ENCODE measurements at regions of chr1 and their contacts with region 1.

Region 1: DNA sequence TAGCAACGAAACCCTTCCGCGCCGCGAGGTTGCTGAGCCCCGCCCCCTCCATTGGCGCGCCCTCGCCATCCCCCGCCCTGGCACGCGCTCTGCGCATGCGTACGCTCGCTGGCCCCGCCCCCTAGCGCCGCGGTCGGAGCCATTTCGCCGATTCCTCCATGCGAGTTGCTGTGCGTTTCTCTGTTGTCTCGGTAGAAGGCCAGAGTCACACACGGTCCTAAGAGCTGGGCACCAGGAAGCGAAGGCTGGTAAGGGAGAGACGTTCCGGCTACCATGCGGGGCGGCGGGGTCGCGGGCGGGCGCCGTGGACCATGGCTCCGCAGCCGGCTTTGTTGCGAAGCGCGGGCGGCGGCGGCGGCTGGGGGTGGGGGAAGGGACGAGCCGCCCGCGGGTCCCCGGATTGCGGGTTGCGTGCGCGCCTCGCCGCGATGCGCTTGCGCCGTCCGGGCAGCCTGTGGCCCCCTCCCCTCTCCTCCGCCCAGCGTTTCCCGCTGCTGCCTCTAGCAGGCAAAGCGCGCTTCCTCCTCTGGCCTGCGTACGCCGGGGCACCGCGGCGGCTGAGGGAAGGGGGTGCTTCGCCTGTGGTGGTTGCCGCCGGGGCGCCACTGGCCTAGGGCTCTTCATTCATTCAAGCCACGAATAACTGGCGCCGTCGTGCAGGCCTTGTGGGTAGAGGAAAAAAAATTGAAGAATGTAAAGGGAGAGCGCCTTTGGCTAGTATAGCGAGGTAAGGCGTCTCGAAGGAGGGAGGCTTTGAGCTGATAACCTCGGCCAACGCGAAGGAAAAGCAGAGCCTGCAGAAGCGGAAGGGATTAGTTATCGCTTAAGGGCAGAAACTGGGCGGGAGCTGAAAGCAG is at the start of gene DHX9:
- DNase-seq: peak; percentile 93 to 99 (median 96)
- ATAC-seq: peak; percentile 84
- H3K4me3 ChIP-seq: peak within 1 kb of the TSS; percentile 69 to 87
- H3K4me3 Mint-ChIP-seq: peak within 1 kb of the TSS; percentile 95
- H3K27ac ChIP-seq: peak within 1 kb of the TSS; percentile 66 to 86
- H3K27ac Mint-ChIP-seq: peak within 1 kb of the TSS; percentile 98
- H3K4me1 ChIP-seq: peaks cover 36% of the 10 kb centered on the region
- H3K4me1 Mint-ChIP-seq: peaks cover 49% of the 10 kb centered on the region
- H3K27me3 ChIP-seq: no peaks in the 10 kb centered on the region
- H3K27me3 Mint-ChIP-seq: no peaks in the 10 kb centered on the region
- CTCF ChIP-seq: peak; percentile 28
- total RNA-seq, gene DHX9: 374 to 382 TPM

Region 2: GRCh38 chr1:182337736-182338571 is 501.5 kb before region 1 on chr1:
- CTCF ChIA-PET with region 1: no interaction called
- POLR2A ChIA-PET with region 1: no interaction called
- intact Hi-C with region 1: no loop called
- DNase-seq: no peak
- ATAC-seq: no peak
- H3K4me3 ChIP-seq: no peak overlapping the region
- H3K4me3 Mint-ChIP-seq: no peak overlapping the region
- H3K27ac ChIP-seq: no peak overlapping the region
- H3K27ac Mint-ChIP-seq: no peak overlapping the region
- H3K4me1 ChIP-seq: no peaks in the 10 kb centered on the region
- H3K4me1 Mint-ChIP-seq: no peaks in the 10 kb centered on the region
- H3K27me3 ChIP-seq: no peaks in the 10 kb centered on the region
- H3K27me3 Mint-ChIP-seq: no peaks in the 10 kb centered on the region
- CTCF ChIP-seq: no peak

Region 3: DNA sequence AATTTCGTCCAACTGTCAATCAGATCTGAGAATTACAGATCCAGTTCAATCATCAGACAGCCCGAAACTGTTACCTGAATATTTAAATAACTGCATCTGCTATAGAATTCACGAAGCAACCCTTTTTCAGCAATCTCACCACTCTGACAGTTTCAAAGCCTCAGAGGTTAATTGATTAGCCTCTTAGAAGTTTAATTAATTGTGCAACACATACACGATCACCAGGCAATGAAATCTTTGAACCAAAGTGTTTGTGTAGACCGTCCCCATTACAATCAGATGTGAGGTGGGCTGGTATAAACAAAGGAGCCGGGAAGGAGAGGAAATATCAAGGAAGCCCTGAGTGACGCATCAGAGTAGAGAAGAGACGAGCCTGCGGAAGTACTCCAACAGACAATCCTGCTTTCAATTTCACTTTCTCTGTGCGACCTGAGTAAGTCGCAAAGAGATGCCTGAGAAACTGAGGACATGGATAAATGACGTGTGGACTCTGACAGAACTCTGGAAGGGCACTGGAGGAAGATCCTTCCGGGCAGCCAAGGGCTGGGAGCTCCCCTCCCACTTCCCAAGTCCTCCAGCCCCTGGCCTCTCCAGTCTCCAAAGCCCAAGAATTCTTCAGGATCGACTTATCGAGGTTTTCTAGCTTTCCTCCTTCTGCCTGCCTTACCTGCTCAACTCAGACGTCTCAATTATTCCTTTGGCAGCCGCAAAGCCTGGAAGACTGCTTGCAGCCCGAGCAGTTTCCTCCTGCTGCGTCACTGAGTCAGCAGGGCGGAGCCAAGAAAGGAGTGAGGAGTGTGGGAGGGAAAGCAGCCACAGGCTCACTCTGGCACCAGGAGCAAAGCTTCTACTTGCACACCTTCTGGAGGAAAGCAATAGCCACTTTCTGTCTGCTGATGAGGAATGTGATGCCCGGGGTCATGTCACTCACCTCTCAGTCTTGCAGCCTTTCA is 250.7 kb before region 1 on chr1 and contains the start of gene RNASEL:
- CTCF ChIA-PET with region 1: no interaction called
- POLR2A ChIA-PET with region 1: interaction called, 4 read pairs
- intact Hi-C with region 1: loop called (anchors 1 to 5 kb)
- DNase-seq: peak; percentile 24 to 87 (median 51)
- ATAC-seq: peak; percentile 92
- H3K4me3 ChIP-seq: peak within 1 kb of the TSS; percentile 78 to 95
- H3K4me3 Mint-ChIP-seq: peak within 1 kb of the TSS; percentile 94
- H3K27ac ChIP-seq: peak within 1 kb of the TSS; percentile 96 to 99
- H3K27ac Mint-ChIP-seq: peak within 1 kb of the TSS; percentile 99
- H3K4me1 ChIP-seq: peaks cover 44% of the 10 kb centered on the region
- H3K4me1 Mint-ChIP-seq: peaks cover 52% of the 10 kb centered on the region
- H3K27me3 ChIP-seq: no peaks in the 10 kb centered on the region
- H3K27me3 Mint-ChIP-seq: peaks cover 3% of the 10 kb centered on the region
- CTCF ChIP-seq: no peak
- total RNA-seq, gene RNASEL: 1.5 to 1.7 TPM

Region 4: GRCh38 chr1:182789138-182790076 is 50.0 kb before region 1 on chr1 and contains the start of gene NPL:
- CTCF ChIA-PET with region 1: no interaction called
- POLR2A ChIA-PET with region 1: interaction called, 3 read pairs
- intact Hi-C with region 1: loop called (anchors 1 kb)
- DNase-seq: peak; percentile 65 to 92 (median 83)
- ATAC-seq: peak; percentile 96
- H3K4me3 ChIP-seq: peak within 1 kb of the TSS; percentile 69 to 75
- H3K4me3 Mint-ChIP-seq: peak within 1 kb of the TSS; percentile 91
- H3K27ac ChIP-seq: peak within 1 kb of the TSS; percentile 45 to 57
- H3K27ac Mint-ChIP-seq: peak within 1 kb of the TSS; percentile 76
- H3K4me1 ChIP-seq: peaks cover 12% of the 10 kb centered on the region
- H3K4me1 Mint-ChIP-seq: peaks cover 14% of the 10 kb centered on the region
- H3K27me3 ChIP-seq: no peaks in the 10 kb centered on the region
- H3K27me3 Mint-ChIP-seq: no peaks in the 10 kb centered on the region
- CTCF ChIP-seq: no peak
- total RNA-seq, gene NPL: 1.3 to 2.1 TPM

Region 5: DNA sequence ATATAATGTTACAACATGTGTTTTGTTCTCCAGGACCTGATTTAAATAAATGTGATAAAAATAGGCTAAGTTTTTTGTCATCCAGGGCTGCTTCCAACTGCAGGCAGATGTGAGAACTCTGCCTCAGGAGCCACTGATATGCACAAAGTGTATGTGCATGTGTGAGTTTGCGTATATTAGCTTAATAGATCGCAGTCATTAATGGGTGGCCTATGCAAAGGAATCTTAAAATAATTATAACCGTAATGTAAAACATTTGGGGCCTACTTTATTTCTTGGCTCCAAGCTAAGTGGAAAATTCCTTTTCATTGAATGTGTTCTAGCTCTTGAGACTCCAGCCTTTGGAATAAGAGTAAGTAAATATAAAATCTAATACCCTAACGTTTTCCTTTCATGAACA is 16.5 kb after region 1 on chr1:
- CTCF ChIA-PET with region 1: no interaction called
- POLR2A ChIA-PET with region 1: interaction called, 4 read pairs
- intact Hi-C with region 1: loop called in 1 of 2 experiments (anchors 2 kb)
- DNase-seq: no peak
- ATAC-seq: no peak
- H3K4me3 ChIP-seq: no peak overlapping the region
- H3K4me3 Mint-ChIP-seq: no peak overlapping the region
- H3K27ac ChIP-seq: no peak overlapping the region
- H3K27ac Mint-ChIP-seq: no peak overlapping the region
- H3K4me1 ChIP-seq: no peaks in the 10 kb centered on the region
- H3K4me1 Mint-ChIP-seq: peaks cover 7% of the 10 kb centered on the region
- H3K27me3 ChIP-seq: no peaks in the 10 kb centered on the region
- H3K27me3 Mint-ChIP-seq: no peaks in the 10 kb centered on the region
- CTCF ChIP-seq: no peak

Region 6: GRCh38 chr1:182877842-182878241 is 38.4 kb after region 1 on chr1:
- CTCF ChIA-PET with region 1: no interaction called
- POLR2A ChIA-PET with region 1: no interaction called
- intact Hi-C with region 1: loop called in 1 of 2 experiments (anchors 5 kb)
- DNase-seq: no peak
- ATAC-seq: no peak
- H3K4me3 ChIP-seq: no peak overlapping the region
- H3K4me3 Mint-ChIP-seq: no peak overlapping the region
- H3K27ac ChIP-seq: no peak overlapping the region
- H3K27ac Mint-ChIP-seq: no peak overlapping the region
- H3K4me1 ChIP-seq: no peaks in the 10 kb centered on the region
- H3K4me1 Mint-ChIP-seq: peaks cover 4% of the 10 kb centered on the region
- H3K27me3 ChIP-seq: no peaks in the 10 kb centered on the region
- H3K27me3 Mint-ChIP-seq: no peaks in the 10 kb centered on the region
- CTCF ChIP-seq: no peak

Measured in CD8-positive, alpha-beta T cell (primary cell).